Activated CD8-positive, alpha-beta T cell treated with anti-CD3 and anti-CD28 coated beads for 36 hours (primary cell): ENCODE measurements at regions of chr2 and their contacts with region 1.

Region 1: GRCh38 chr2:74566754-74567085 is 12.2 kb downstream of the DOK1 start:
- DNase-seq: no peak
- ATAC-seq: peak; percentile 64
- H3K4me3 Mint-ChIP-seq: peak overlapping the region; percentile 22
- H3K27ac Mint-ChIP-seq: peak overlapping the region; percentile 82
- H3K4me1 Mint-ChIP-seq: peaks cover 30% of the 10 kb centered on the region
- H3K27me3 Mint-ChIP-seq: peaks cover 16% of the 10 kb centered on the region
- CTCF ChIP-seq: no peak

Region 2: DNA sequence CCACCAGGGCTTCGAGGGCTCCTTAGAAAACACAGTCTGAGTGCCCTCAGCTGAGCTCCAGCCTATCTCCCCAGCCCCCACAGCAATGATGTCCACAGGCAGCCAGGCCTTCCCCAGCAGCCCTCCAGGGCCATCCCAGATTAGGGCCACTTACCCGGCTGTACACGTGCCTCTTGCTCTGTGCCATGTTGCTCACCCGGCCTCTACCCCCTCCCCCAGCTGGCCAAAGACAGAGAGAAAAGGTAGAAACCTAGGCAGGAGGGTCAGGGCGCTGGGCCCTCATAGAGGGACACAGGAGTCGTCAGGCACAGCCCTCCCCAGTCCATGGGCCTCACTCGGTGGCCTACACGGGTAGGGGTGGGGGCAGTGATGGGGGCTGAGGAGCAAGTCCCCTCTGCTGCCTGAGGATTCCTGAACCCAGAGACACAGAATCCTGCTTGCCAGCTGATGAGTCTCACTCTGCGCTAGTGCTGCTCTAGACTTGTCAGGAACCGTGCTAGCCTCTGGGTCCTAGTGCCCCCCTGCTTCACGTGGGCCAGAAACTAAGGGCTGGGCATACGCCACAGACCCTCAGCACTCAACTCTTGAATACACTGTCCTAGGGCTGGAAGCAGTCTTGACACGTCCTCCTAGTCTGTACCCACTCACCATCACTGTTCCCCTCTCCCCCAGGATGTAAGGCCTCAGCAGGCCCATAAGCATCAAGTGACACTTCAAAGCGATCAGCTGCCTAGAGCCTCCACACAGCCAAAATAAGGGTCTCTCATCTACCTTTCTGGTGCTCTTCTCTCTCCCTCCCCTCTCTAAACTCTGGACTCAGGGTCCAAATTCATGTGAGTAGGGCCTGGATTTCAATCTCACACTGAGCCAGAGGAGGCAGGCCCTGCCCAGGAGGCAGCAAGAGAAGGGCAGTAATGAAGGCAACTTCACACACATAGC is 186.6 kb before region 1 on chr2 and contains the start of gene DCTN1:
- CTCF ChIA-PET with region 1: no interaction called
- POLR2A ChIA-PET with region 1: no interaction called
- intact Hi-C with region 1: no loop called
- DNase-seq: peak; percentile 46
- ATAC-seq: peak; percentile 80
- H3K4me3 Mint-ChIP-seq: no peak within 1 kb of the TSS
- H3K27ac Mint-ChIP-seq: peak within 1 kb of the TSS; percentile 40
- H3K4me1 Mint-ChIP-seq: peaks cover 29% of the 10 kb centered on the region
- H3K27me3 Mint-ChIP-seq: no peaks in the 10 kb centered on the region
- CTCF ChIP-seq: no peak
- total RNA-seq, gene DCTN1: 67.3 to 81.4 TPM

Region 3: GRCh38 chr2:74553892-74554645 is 12.7 kb before region 1 on chr2 and contains the start of gene LOXL3:
- CTCF ChIA-PET with region 1: interaction called, 3 read pairs
- POLR2A ChIA-PET with region 1: interaction called, 11 read pairs
- intact Hi-C with region 1: no loop called
- DNase-seq: peak; percentile 84
- ATAC-seq: peak; percentile 53
- H3K4me3 Mint-ChIP-seq: peak within 1 kb of the TSS; percentile 88
- H3K27ac Mint-ChIP-seq: peak within 1 kb of the TSS; percentile 90
- H3K4me1 Mint-ChIP-seq: peaks cover 15% of the 10 kb centered on the region
- H3K27me3 Mint-ChIP-seq: peaks cover 27% of the 10 kb centered on the region
- CTCF ChIP-seq: no peak
- total RNA-seq, gene LOXL3: 0.38 to 0.60 TPM